Activated CD8-positive, alpha-beta T cell treated with anti-CD3 and anti-CD28 coated beads for 36 hours (primary cell): ENCODE measurements at regions of chr11 and their contacts with region 1.

Region 1: DNA sequence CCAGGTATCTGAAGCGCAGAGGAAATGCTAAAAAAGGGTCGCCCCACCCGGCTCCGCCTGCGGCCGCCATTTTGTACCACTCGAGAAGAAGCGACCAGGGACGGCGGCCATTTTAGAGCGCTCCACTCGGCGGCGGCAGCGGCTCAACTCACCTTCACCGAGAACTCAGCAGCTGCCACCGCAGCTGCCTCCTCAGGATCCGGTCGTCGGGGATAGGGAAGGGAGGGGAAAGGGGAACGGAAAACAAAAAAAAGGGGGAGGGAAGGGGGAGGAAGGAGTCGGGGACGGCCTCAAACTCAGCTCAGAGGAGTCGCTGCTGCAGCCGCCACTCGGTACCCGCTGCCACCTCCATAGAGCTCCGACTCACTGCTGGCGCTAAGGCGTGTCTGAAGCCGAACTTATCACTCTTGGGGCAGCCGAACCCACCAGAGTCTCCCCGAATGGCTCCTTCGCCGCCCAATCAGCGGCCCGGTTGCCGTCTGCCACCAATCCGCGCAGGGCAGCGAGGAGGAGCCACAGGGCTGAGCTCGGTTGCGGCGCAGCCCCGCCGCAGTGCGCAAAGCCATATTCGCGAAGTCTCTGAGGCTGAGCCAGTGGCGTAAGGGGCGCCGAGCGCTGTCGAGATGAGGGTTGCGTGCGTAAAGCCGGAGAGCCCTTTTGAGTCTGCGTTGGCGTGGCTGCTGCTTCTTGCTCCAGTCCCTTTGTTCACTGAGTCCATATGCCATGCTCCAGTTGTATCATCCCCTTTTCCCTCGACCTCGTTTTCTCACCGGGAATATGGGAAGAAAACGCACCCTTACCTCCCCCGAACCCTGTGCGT is at the start of gene EIF4G2:
- DNase-seq: peak; percentile 97
- ATAC-seq: peak; percentile 95
- H3K4me3 Mint-ChIP-seq: peak within 1 kb of the TSS; percentile 94
- H3K27ac Mint-ChIP-seq: peak within 1 kb of the TSS; percentile 98
- H3K4me1 Mint-ChIP-seq: peaks cover 33% of the 10 kb centered on the region
- H3K27me3 Mint-ChIP-seq: no peaks in the 10 kb centered on the region
- CTCF ChIP-seq: no peak
- total RNA-seq, gene EIF4G2: 757 to 842 TPM

Region 2: DNA sequence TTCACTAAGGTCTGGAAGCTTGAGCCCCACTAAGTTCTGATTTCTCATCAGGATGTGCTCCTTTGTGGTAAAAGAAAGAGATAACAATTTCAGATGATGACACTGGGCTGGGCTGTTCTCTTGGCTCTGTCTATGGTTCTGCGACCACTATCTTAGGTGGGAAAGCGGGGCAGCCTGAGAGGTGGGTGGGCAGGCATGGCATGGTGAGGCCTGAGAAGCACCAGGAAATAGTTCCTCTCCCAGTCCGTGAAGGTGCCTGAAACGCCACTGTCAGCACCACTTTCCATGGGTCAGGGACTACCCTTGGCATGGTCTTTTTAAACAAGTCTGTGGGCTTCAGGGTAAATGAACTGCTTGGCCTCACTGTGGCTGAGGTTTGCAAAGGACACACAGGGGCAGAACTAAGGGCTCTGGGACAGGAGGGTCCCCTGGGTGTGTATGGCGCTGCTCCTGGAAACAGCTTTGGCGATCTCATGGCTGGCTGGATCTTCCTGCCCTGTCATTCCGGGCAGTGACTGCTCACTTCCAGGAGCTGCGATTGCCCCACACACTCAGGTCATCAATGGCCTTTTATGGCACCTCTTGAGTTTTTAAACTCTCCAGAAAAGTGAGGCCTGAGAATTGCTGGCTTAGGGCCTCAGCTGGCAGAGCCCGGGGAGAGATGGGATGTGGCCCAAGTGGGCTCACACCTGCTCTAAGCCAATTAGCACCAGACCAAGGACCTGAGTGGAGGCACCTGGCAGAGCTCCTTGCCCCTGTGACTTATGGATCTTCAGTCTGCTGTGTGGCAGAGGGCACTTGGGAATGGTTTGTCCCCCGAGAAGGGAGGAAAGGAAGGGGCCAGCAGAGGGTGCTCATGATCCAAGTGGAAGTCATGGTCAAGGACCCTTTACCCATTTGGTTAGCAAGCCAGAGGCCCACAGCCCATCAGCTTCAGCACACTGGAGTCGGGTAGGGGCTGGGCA is 184.7 kb before region 1 on chr11:
- CTCF ChIA-PET with region 1: no interaction called
- POLR2A ChIA-PET with region 1: no interaction called
- intact Hi-C with region 1: no loop called
- DNase-seq: peak; percentile 27
- ATAC-seq: no peak
- H3K4me3 Mint-ChIP-seq: no peak overlapping the region
- H3K27ac Mint-ChIP-seq: peak overlapping the region; percentile 83
- H3K4me1 Mint-ChIP-seq: peaks cover 19% of the 10 kb centered on the region
- H3K27me3 Mint-ChIP-seq: no peaks in the 10 kb centered on the region
- CTCF ChIP-seq: no peak

Region 3: GRCh38 chr11:10641177-10641911 is 167.4 kb before region 1 on chr11:
- CTCF ChIA-PET with region 1: no interaction called
- POLR2A ChIA-PET with region 1: no interaction called
- intact Hi-C with region 1: no loop called
- DNase-seq: no peak
- ATAC-seq: no peak
- H3K4me3 Mint-ChIP-seq: no peak overlapping the region
- H3K27ac Mint-ChIP-seq: no peak overlapping the region
- H3K4me1 Mint-ChIP-seq: no peaks in the 10 kb centered on the region
- H3K27me3 Mint-ChIP-seq: no peaks in the 10 kb centered on the region
- CTCF ChIP-seq: no peak

Region 4: GRCh38 chr11:10797531-10797930 is 11.2 kb before region 1 on chr11:
- CTCF ChIA-PET with region 1: interaction called, 73 read pairs
- POLR2A ChIA-PET with region 1: interaction called, 117 read pairs
- intact Hi-C with region 1: no loop called
- DNase-seq: no peak
- ATAC-seq: no peak
- H3K4me3 Mint-ChIP-seq: no peak overlapping the region
- H3K27ac Mint-ChIP-seq: no peak overlapping the region
- H3K4me1 Mint-ChIP-seq: peaks cover 56% of the 10 kb centered on the region
- H3K27me3 Mint-ChIP-seq: peaks cover 5% of the 10 kb centered on the region
- CTCF ChIP-seq: no peak

Region 5: DNA sequence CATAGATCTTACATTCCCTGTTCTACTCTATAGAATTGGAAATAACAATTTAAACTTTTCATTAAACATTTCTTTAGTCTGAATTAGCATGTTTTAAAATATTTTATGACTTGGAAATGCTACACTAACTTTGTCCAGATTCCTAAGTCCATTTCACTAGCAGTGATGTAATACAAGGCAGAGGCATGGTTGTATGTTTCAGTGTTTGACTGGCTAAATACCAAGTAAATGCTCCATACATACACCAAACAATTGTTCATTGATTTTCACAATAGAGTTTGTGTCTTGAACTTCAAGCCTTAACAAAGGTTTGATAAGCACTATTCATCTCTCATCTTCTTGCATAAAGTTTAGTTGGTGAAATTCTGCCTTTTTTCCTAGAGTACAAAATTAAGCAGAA is 35.6 kb after region 1 on chr11:
- CTCF ChIA-PET with region 1: interaction called, 4 read pairs
- POLR2A ChIA-PET with region 1: interaction called, 21 read pairs
- intact Hi-C with region 1: no loop called
- DNase-seq: no peak
- ATAC-seq: no peak
- H3K4me3 Mint-ChIP-seq: no peak overlapping the region
- H3K27ac Mint-ChIP-seq: no peak overlapping the region
- H3K4me1 Mint-ChIP-seq: peaks cover 17% of the 10 kb centered on the region
- H3K27me3 Mint-ChIP-seq: no peaks in the 10 kb centered on the region
- CTCF ChIP-seq: no peak

Region 6: GRCh38 chr11:10878408-10879214 is 69.8 kb after region 1 on chr11:
- CTCF ChIA-PET with region 1: interaction called, 8 read pairs
- POLR2A ChIA-PET with region 1: interaction called, 24 read pairs
- intact Hi-C with region 1: no loop called
- DNase-seq: no peak
- ATAC-seq: peak; percentile 74
- H3K4me3 Mint-ChIP-seq: no peak overlapping the region
- H3K27ac Mint-ChIP-seq: no peak overlapping the region
- H3K4me1 Mint-ChIP-seq: peaks cover 9% of the 10 kb centered on the region
- H3K27me3 Mint-ChIP-seq: no peaks in the 10 kb centered on the region
- CTCF ChIP-seq: peak; percentile 75

Region 7: GRCh38 chr11:10913075-10913474 is 104.3 kb after region 1 on chr11:
- CTCF ChIA-PET with region 1: no interaction called
- POLR2A ChIA-PET with region 1: no interaction called
- intact Hi-C with region 1: no loop called
- DNase-seq: no peak
- ATAC-seq: no peak
- H3K4me3 Mint-ChIP-seq: no peak overlapping the region
- H3K27ac Mint-ChIP-seq: no peak overlapping the region
- H3K4me1 Mint-ChIP-seq: no peaks in the 10 kb centered on the region
- H3K27me3 Mint-ChIP-seq: no peaks in the 10 kb centered on the region
- CTCF ChIP-seq: no peak

Region 8: GRCh38 chr11:10943968-10944367 is 135.2 kb after region 1 on chr11:
- CTCF ChIA-PET with region 1: no interaction called
- POLR2A ChIA-PET with region 1: interaction called, 11 read pairs
- intact Hi-C with region 1: no loop called
- DNase-seq: no peak
- ATAC-seq: no peak
- H3K4me3 Mint-ChIP-seq: no peak overlapping the region
- H3K27ac Mint-ChIP-seq: no peak overlapping the region
- H3K4me1 Mint-ChIP-seq: peaks cover 3% of the 10 kb centered on the region
- H3K27me3 Mint-ChIP-seq: no peaks in the 10 kb centered on the region
- CTCF ChIP-seq: no peak